Activated CD4-positive, alpha-beta T cell treated with anti-CD3 and anti-CD28 coated beads for 36 hours (primary cell): ENCODE measurements at regions of chr5 and their contacts with region 1.

Region 1: DNA sequence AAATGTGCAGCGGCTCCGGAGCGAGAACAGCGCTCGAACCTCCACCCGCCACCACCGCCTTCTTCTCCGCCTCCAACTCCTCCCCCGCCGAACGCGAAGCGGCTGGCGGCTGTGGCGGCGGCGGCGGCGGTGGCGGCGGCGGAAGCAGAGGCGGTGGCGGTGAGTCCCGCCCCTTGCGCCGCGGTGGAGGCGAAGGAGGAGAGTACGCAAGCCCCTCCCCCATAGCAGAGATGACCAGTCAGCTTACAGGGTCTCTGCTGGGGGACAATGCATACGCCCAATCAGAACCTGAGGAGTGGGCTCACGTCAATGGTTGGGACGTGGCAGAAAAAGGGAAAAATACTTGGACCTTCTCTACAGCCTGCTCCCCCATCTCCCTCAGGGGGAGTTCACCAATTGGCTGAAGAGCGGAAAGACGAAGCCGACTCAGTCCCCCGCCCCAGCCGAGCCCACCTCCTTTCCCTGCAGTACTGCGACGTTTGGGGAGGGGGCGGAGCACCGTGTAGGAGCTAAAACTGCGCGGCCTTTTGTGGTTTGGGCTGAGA is at the start of gene PJA2:
- DNase-seq: peak; percentile 98
- ATAC-seq: peak; percentile 89
- H3K4me3 Mint-ChIP-seq: peak within 1 kb of the TSS; percentile 99
- H3K27ac Mint-ChIP-seq: peak within 1 kb of the TSS; percentile 99
- H3K4me1 Mint-ChIP-seq: peaks cover 41% of the 10 kb centered on the region
- H3K27me3 Mint-ChIP-seq: no peaks in the 10 kb centered on the region
- total RNA-seq, gene PJA2: 51.8 to 56.4 TPM

Region 2: DNA sequence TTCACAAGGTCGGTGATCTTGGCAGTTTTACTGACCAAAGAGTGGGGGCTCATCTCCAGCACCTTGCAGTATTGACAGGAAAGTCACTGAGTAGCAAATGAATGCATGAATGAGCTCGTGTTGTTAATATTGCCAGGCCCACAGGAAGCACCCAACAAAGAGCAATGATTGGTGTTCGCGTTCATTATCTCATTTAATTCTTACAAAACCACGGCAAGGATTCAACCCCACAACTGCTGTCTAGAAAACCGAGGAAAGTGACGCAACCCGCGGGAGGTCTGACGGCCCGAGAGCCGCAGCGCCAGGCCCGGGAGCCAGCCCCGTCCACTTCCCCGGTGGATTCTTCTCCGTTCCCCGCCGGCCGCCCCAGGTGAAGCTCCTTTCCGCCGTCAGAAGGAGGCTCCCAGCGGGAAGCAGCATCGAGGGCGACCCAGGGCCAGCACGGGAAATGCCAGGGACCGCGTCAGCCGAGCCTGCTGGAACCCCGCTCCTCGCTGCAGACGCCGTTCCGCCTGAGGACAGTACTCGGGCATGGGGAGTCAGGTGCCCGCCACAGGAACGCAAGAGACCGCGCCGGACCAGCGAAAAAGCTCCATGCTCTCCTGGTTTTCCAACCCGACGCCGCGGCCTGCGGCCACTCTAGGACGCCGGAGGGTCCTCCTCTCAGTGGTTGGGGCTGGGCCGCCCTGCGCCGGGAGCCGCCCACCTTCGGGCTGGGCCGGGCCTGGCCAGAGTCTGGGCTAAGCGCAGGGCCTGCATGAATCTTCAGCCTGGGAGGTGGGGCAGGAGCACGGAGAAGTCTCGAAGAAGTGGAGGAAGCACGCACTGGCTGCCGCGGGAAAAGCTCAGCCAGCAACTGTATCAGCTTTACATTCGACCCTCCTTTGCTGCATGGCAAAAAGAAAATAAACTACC is 682.0 kb before region 1 on chr5:
- CTCF ChIA-PET with region 1: no interaction called
- POLR2A ChIA-PET with region 1: no interaction called
- intact Hi-C with region 1: loop called in 1 of 2 experiments (anchors 5 kb)
- DNase-seq: peak; percentile 54
- ATAC-seq: peak; percentile 77
- H3K4me3 Mint-ChIP-seq: peak overlapping the region; percentile 58
- H3K27ac Mint-ChIP-seq: peak overlapping the region; percentile 66
- H3K4me1 Mint-ChIP-seq: peaks cover 19% of the 10 kb centered on the region
- H3K27me3 Mint-ChIP-seq: peaks cover 32% of the 10 kb centered on the region

Region 3: GRCh38 chr5:109242518-109242917 is 167.4 kb before region 1 on chr5:
- CTCF ChIA-PET with region 1: no interaction called
- POLR2A ChIA-PET with region 1: no interaction called
- intact Hi-C with region 1: loop called (anchors 5 to 10 kb)
- DNase-seq: peak; percentile 7
- ATAC-seq: peak; percentile 87
- H3K4me3 Mint-ChIP-seq: no peak overlapping the region
- H3K27ac Mint-ChIP-seq: no peak overlapping the region
- H3K4me1 Mint-ChIP-seq: peaks cover 2% of the 10 kb centered on the region
- H3K27me3 Mint-ChIP-seq: peaks cover 2% of the 10 kb centered on the region

Region 4: DNA sequence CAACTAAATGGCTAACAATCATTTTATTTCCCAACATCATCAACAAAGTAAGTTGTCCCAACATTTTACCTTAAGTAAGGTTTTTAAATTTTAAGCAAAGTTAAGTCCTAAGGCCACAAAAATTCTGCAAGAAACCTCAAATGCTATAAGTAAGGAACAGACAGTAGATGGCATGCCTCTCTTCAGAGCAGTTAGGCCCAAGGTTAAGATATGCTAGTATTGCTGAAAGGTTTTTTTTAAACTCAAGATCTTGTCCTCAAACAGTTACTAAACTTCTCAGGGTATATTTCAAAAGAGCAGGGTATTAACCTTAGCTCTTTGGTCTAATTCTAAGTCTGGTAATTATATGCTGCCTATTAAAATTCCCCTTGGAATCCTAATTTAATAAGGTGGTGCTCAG is 35.3 kb before region 1 on chr5:
- CTCF ChIA-PET with region 1: interaction called, 3 read pairs
- POLR2A ChIA-PET with region 1: no interaction called
- intact Hi-C with region 1: loop called in 1 of 2 experiments (anchors 5 kb)
- DNase-seq: no peak
- ATAC-seq: no peak
- H3K4me3 Mint-ChIP-seq: no peak overlapping the region
- H3K27ac Mint-ChIP-seq: no peak overlapping the region
- H3K4me1 Mint-ChIP-seq: peaks cover 37% of the 10 kb centered on the region
- H3K27me3 Mint-ChIP-seq: no peaks in the 10 kb centered on the region

Region 5: DNA sequence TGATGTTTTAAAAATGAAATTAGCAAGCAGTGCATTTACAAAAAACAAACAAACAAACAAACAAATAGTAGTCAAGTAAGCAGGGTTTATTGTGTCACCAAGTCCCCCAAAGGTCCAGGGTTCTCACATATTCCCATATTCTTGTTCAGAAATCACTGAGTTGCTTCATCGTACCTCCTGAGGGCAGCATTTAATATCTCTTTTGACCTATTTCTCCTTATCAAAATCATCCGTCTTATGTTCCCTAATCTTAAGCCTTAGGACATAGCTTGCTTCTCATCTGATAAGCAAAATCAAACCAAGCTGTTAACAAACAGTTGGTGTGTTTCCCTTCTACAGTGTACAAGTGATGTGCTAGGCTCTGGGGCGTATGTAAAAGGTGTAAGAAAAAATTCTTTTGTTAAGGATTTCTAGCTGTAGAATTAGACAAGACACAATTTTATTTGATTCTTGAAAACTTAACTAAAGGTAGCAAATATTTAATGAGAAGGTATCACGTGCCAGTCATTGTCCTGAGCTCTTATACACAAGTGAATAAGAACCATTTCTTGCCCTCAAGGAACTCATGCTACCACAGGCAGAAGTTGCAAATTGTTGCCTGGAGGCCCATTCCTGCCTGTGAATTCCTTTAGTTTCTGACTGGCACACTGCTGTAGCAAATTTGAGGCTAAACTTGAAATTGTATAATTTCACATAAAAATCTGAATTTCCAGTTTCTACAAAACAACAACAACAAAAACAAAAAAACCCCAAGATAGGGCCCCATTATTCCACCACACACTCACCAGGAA is 170.5 kb after region 1 on chr5:
- CTCF ChIA-PET with region 1: no interaction called
- POLR2A ChIA-PET with region 1: no interaction called
- intact Hi-C with region 1: no loop called
- DNase-seq: no peak
- ATAC-seq: no peak
- H3K4me3 Mint-ChIP-seq: no peak overlapping the region
- H3K27ac Mint-ChIP-seq: no peak overlapping the region
- H3K4me1 Mint-ChIP-seq: no peaks in the 10 kb centered on the region
- H3K27me3 Mint-ChIP-seq: peaks cover 8% of the 10 kb centered on the region

Region 6: GRCh38 chr5:109718216-109718615 is 308.3 kb after region 1 on chr5:
- CTCF ChIA-PET with region 1: no interaction called
- POLR2A ChIA-PET with region 1: no interaction called
- intact Hi-C with region 1: no loop called
- DNase-seq: no peak
- ATAC-seq: no peak
- H3K4me3 Mint-ChIP-seq: no peak overlapping the region
- H3K27ac Mint-ChIP-seq: no peak overlapping the region
- H3K4me1 Mint-ChIP-seq: peaks cover 14% of the 10 kb centered on the region
- H3K27me3 Mint-ChIP-seq: no peaks in the 10 kb centered on the region

Region 7: DNA sequence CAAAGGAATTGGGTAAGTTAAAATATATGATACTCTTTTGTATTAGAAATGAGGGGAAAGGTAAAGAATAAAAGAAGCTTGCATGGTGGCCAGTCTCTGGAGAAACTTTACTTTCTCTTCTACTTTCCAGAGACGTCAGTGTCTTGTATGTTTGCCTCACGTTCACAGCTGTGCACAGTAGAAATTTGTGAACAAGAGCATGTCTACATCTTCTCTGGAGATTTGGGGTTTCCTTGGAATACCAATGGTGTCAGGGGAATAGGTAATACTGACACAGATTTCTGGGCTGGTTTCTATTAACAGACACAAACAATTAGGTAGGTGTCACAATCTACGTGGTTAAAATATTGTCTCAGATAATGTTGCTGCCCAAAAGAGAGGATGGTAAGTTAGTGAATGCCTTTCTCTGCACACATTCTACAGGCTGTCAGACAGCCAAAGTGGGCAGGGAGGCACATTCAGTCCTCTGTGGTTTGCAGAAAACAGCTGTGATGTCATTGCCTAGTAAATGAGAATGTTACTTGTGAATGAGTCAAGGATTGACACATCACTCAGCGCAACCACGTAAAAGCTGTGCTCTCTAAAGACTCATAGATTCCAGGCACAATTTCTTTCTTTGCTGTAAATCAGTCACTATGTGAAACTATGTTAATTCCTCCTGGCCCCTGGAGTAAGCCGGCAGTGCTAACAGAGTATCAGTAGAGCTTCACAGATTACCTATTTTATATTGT is 676.9 kb after region 1 on chr5:
- CTCF ChIA-PET with region 1: no interaction called
- POLR2A ChIA-PET with region 1: no interaction called
- intact Hi-C with region 1: loop called in 1 of 2 experiments (anchors 1 kb)
- DNase-seq: peak; percentile 81
- ATAC-seq: peak; percentile 90
- H3K4me3 Mint-ChIP-seq: peak overlapping the region; percentile 32
- H3K27ac Mint-ChIP-seq: peak overlapping the region; percentile 89
- H3K4me1 Mint-ChIP-seq: peaks cover 57% of the 10 kb centered on the region
- H3K27me3 Mint-ChIP-seq: no peaks in the 10 kb centered on the region

Region 8: DNA sequence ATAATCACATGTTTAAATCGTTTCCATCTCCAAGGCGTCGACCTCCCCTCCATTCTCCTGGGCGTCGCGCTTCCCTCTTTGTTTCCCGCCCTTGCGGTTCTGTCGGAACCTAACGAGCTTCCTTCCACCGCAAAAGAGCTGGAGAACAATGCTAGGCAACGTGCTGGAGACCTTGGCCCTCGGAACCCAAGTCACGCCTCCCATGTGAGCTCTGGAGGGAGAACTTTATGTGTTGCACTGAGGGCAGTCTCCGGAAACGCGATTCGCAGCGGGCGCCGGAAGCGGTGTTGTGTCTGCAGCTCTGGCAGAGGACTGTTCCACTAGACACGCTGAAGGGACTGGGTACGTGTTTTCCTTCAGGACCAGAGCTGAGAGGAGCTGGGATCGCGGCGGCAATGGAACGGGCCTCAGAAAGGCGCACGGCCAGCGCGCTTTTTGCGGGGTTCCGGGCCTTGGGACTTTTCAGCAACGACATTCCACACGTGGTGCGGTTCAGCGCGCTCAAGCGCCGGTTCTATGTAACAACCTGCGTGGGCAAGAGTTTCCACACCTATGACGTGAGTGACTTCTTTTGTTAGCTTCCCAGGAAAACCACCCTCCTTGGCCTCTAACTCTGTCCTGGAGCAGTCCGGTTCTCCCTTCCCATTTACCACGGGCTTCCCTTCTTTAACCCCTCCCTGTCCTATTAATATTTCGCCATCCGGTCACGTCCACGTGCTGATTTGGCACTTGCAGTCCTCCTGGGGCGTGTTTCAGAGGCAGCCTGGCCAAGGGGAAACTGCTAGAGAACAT is 1682.3 kb after region 1 on chr5 and contains the start of gene WDR36:
- CTCF ChIA-PET with region 1: no interaction called
- POLR2A ChIA-PET with region 1: no interaction called
- intact Hi-C with region 1: loop called in 1 of 2 experiments (anchors 10 kb)
- DNase-seq: peak; percentile 93
- ATAC-seq: peak; percentile 91
- H3K4me3 Mint-ChIP-seq: peak within 1 kb of the TSS; percentile 92
- H3K27ac Mint-ChIP-seq: peak within 1 kb of the TSS; percentile 96
- H3K4me1 Mint-ChIP-seq: peaks cover 31% of the 10 kb centered on the region
- H3K27me3 Mint-ChIP-seq: peaks cover 4% of the 10 kb centered on the region
- total RNA-seq, gene WDR36: 58.6 to 61.7 TPM

Region 9: DNA sequence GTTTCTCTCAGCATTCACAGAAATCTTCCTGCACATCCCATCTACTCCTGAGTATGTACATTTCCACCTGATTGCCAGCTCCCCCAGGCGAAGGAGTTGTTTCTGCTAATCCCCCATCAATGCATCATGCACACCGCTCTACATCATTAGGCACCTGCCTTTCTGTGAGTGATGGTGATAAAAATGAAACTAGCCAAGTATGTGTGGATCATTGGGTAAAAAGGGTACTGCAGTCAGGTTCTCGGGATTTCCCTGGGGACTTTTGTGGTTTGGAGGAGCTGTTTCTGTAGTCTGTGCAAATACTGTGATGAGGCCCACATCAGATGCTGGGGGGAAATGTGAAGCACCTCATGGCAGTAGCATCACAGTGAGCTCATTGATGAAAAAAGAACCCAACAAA is 1844.7 kb after region 1 on chr5:
- CTCF ChIA-PET with region 1: no interaction called
- POLR2A ChIA-PET with region 1: no interaction called
- intact Hi-C with region 1: loop called in 1 of 2 experiments (anchors 10 kb)
- DNase-seq: peak; percentile 91
- ATAC-seq: peak; percentile 86
- H3K4me3 Mint-ChIP-seq: peak overlapping the region; percentile 63
- H3K27ac Mint-ChIP-seq: peak overlapping the region; percentile 95
- H3K4me1 Mint-ChIP-seq: peaks cover 91% of the 10 kb centered on the region
- H3K27me3 Mint-ChIP-seq: no peaks in the 10 kb centered on the region